BJ (cell line): ENCODE measurements at regions of chr1 and their contacts with region 1.

Region 1: GRCh38 chr1:204213668-204214662 is at the start of gene GOLT1A:
- DNase-seq: peak; percentile 32
- H3K4me3 ChIP-seq: no peak within 1 kb of the TSS
- H3K27me3 ChIP-seq: no peaks in the 10 kb centered on the region
- CTCF ChIP-seq: peak; percentile 87
- polyA plus RNA-seq, gene GOLT1A: 0.21 TPM in 2 replicates

Region 2: DNA sequence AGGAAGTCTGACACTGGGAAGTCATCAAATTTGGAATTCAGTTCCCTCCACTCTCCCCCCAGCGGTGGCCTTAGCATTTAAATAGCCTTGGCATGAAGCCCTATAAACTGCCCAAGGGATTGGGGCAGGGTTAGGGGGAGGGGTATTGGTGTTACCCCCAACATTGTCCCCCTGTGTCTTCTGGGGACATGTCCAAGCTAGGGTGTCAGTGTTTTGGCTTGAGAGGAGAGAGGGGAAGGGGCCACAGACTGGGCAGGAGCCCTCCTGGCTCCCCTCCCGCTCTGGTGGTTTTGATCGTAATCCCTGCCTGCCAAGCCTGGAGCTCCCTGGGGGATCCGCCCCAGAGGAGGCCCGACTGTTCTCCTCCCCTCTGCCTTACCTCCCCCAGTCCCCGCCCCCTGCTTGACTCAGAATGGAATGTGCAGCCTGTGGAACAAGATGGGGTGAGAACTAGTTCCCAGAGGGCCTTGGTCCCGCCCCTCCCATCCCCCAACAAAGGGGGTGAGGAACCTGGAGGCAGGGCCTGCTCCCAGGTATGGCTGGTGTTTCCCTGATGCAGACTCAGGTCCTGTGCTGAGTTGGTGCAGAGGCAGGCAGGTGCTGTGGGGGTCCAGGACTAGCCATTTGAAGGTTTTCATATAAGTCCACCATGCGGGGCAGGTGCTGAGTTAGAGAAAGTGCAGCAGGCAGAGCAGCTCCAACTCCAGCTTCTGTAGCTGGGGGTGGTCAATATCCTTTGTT is 133.6 kb before region 1 on chr1:
- CTCF ChIA-PET with region 1: no interaction called
- POLR2A ChIA-PET with region 1: no interaction called
- DNase-seq: no peak
- H3K4me3 ChIP-seq: no peak overlapping the region
- H3K27me3 ChIP-seq: no peaks in the 10 kb centered on the region
- CTCF ChIP-seq: no peak

Region 3: GRCh38 chr1:204225841-204226735 is 12.1 kb after region 1 on chr1:
- CTCF ChIA-PET with region 1: interaction called, 13 read pairs
- POLR2A ChIA-PET with region 1: no interaction called
- DNase-seq: no peak
- H3K4me3 ChIP-seq: no peak overlapping the region
- H3K27me3 ChIP-seq: no peaks in the 10 kb centered on the region
- CTCF ChIP-seq: no peak

Region 4: DNA sequence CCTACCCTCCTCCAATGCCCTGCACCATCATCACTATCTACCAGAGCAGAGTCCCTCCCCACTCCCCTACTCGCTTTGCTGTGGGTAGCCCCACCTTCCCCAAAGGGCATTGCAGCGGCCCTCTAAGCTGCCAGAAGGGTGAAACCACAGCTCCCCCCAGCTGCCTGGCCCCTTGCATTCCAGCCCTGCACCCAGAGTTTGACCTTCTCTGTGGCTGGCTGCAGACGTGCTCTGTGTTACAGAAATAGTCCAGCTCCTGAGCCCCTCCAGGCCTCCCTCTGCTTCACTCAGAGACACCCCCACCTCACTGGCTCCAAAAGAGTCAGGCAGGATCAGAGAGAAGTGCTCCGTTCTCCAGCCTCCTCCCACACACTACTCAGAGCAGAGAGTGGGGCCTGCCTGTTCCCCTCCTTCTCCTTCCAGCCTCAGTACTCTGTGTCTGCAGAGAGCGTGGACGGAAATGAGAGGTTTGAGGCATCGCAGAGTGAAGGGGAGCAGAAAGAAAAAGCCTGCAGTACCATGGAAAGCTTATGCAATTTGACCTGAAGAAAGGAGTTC is 82.5 kb after region 1 on chr1:
- CTCF ChIA-PET with region 1: interaction called, 14 read pairs
- POLR2A ChIA-PET with region 1: no interaction called
- DNase-seq: peak; percentile 82
- H3K4me3 ChIP-seq: no peak overlapping the region
- H3K27me3 ChIP-seq: no peaks in the 10 kb centered on the region
- CTCF ChIP-seq: no peak